Activated CD4-positive, alpha-beta T cell treated with anti-CD3 and anti-CD28 coated beads for 36 hours (primary cell): ENCODE measurements at regions of chr19 and their contacts with region 1.

Region 1: DNA sequence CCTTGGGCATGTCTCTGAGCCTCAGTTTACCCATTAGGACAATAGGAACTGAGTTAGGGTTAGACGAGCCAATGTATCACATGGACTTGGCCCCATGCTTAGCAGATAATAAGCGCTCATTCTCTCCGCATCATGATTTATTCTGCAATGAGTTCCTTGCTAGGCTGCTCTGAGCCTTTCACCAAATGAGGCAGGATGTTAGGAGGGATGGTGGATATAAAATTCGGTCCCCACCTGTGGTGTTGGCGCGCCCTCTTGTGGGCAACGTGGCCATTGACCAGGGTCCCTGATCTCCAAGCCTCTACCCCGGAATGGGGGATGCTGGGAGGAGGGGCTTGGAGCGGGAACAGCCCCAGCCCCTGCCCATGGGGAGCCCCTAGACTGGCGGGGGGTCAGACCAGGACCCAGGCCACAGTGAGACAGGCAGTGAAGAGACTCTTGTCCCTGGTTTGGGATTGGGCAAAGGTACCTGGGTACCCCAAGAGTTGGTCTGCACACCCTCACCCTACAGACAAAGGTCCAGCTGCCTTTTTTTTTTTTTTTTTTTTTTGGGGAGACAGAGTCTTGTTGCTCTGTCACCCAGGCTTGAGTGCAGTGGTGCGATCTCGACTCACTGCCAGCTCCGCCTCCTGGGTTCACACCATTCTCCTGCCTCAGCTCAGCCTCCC is 43.9 kb downstream of the CERS4 start:
- DNase-seq: peak; percentile 91
- ATAC-seq: peak; percentile 96
- H3K4me3 Mint-ChIP-seq: no peak overlapping the region
- H3K27ac Mint-ChIP-seq: no peak overlapping the region
- H3K4me1 Mint-ChIP-seq: no peaks in the 10 kb centered on the region
- H3K27me3 Mint-ChIP-seq: no peaks in the 10 kb centered on the region

Region 2: GRCh38 chr19:7970716-7971448 is 282.2 kb before region 1 on chr19:
- CTCF ChIA-PET with region 1: interaction called, 3 read pairs
- POLR2A ChIA-PET with region 1: no interaction called
- intact Hi-C with region 1: loop called in 1 of 2 experiments (anchors 2 kb)
- DNase-seq: peak; percentile 56
- ATAC-seq: peak; percentile 65
- H3K4me3 Mint-ChIP-seq: no peak overlapping the region
- H3K27ac Mint-ChIP-seq: no peak overlapping the region
- H3K4me1 Mint-ChIP-seq: no peaks in the 10 kb centered on the region
- H3K27me3 Mint-ChIP-seq: no peaks in the 10 kb centered on the region

Region 3: GRCh38 chr19:8158411-8159074 is 94.5 kb before region 1 on chr19:
- CTCF ChIA-PET with region 1: interaction called, 9 read pairs
- POLR2A ChIA-PET with region 1: no interaction called
- intact Hi-C with region 1: loop called (anchors 1 kb)
- DNase-seq: peak; percentile 59
- ATAC-seq: peak; percentile 87
- H3K4me3 Mint-ChIP-seq: no peak overlapping the region
- H3K27ac Mint-ChIP-seq: no peak overlapping the region
- H3K4me1 Mint-ChIP-seq: peaks cover 4% of the 10 kb centered on the region
- H3K27me3 Mint-ChIP-seq: peaks cover 9% of the 10 kb centered on the region

Region 4: GRCh38 chr19:8536282-8536681 is 283.2 kb after region 1 on chr19:
- CTCF ChIA-PET with region 1: no interaction called
- POLR2A ChIA-PET with region 1: no interaction called
- intact Hi-C with region 1: no loop called
- DNase-seq: no peak
- ATAC-seq: no peak
- H3K4me3 Mint-ChIP-seq: no peak overlapping the region
- H3K27ac Mint-ChIP-seq: peak overlapping the region; percentile 13
- H3K4me1 Mint-ChIP-seq: no peaks in the 10 kb centered on the region
- H3K27me3 Mint-ChIP-seq: no peaks in the 10 kb centered on the region